ENCODE measurements at regions of chr16 and their contacts with region 1.

Region 1: GRCh38 chr16:11470676-11471415 is 115.9 kb downstream of the LITAF start:
- DNase-seq: no peak
- H3K4me3 ChIP-seq: no peak overlapping the region
- H3K27ac ChIP-seq: no peak overlapping the region
- H3K4me1 ChIP-seq: no peaks in the 10 kb centered on the region
- H3K27me3 ChIP-seq: no peaks in the 10 kb centered on the region
- CTCF ChIP-seq: no peak
- POLR2A ChIP-seq: no peak

Region 2: GRCh38 chr16:11431915-11432465 is 38.9 kb before region 1 on chr16:
- intact Hi-C with region 1: loop called in 1 of 2 experiments (anchors 5 kb)
- DNase-seq: no peak
- H3K4me3 ChIP-seq: no peak overlapping the region
- H3K27ac ChIP-seq: no peak overlapping the region
- H3K4me1 ChIP-seq: no peaks in the 10 kb centered on the region
- H3K27me3 ChIP-seq: no peaks in the 10 kb centered on the region
- CTCF ChIP-seq: no peak
- POLR2A ChIP-seq: no peak